ENCODE measurements at regions of chr16 and their contacts with region 1.

Region 1: DNA sequence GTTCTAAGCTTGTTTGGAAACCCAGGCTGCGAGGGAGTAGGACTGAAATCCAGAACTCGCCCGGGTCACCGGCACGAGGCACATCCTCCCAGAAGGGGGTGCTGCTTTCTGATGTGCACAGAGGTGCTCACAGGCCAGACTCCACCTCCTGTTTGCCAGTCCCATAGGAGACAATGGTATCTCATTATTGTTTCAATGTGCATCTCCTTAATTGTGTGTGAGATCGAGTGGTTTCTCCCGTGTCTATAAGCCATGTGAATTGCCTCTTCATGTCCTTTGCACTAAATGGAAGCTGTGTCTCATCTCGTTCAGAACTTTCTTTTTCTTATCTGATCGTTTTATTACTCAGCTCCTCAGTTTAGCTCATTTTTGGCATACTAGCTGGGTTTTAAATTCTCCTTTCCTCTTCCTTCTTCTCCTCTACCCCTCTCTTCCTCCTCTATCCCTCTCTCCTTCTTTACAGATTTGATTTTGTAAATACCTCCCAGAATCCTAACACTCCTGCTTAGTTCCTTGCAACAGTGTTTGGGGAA is 32.1 kb upstream of the PRKCB start:
- DNase-seq: peak; percentile 51 to 65 (median 58)
- H3K4me3 ChIP-seq: no peak overlapping the region
- H3K4me3 Mint-ChIP-seq: peak overlapping the region; percentile 21 to 56
- H3K27ac ChIP-seq: no peak overlapping the region
- H3K27ac Mint-ChIP-seq: peak overlapping the region in 1 of 7 donors; percentile 86
- H3K4me1 ChIP-seq: peaks cover 8 to 26% of the 10 kb centered on the region in 2 donors
- H3K4me1 Mint-ChIP-seq: peaks cover 29% of the 10 kb centered on the region
- H3K27me3 ChIP-seq: no peaks in the 10 kb centered on the region
- H3K27me3 Mint-ChIP-seq: peaks cover 0 to 5% (median 2%) of the 10 kb centered on the region in 3 donors
- CTCF ChIP-seq: peak; percentile 86

Region 2: DNA sequence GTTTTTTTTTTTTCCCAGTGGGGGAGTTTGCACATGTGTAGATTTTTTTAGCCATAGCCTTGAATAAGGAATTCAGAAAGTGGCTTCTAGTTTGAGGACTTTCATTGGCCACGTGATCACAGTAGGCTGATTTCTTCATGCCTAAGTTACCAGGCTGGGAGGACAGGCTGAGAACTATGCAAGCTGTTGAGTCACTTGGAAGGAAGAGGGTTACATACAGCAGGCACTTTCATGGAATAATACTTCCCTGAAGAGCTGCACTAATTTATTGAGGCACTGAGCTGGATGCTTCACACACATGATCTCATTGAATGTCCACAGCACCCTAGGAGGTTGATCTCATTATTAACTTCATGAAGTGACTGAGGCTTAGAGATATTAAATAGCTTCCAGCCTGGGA is 54.9 kb after region 1 on chr16:
- intact Hi-C with region 1: loop called in 1 of 2 experiments (anchors 10 kb)
- DNase-seq: peak; percentile 75 to 96 (median 84)
- H3K4me3 ChIP-seq: peak overlapping the region in 1 of 3 experiments; percentile 53
- H3K4me3 Mint-ChIP-seq: peak overlapping the region; percentile 24 to 62
- H3K27ac ChIP-seq: peak overlapping the region; percentile 85 to 87
- H3K27ac Mint-ChIP-seq: peak overlapping the region; percentile 93 to 98 (median 95)
- H3K4me1 ChIP-seq: peaks cover 98 to 100% of the 10 kb centered on the region in 2 donors
- H3K4me1 Mint-ChIP-seq: peaks cover 96% of the 10 kb centered on the region
- H3K27me3 ChIP-seq: no peaks in the 10 kb centered on the region
- H3K27me3 Mint-ChIP-seq: no peaks in the 10 kb centered on the region
- CTCF ChIP-seq: no peak

Region 3: DNA sequence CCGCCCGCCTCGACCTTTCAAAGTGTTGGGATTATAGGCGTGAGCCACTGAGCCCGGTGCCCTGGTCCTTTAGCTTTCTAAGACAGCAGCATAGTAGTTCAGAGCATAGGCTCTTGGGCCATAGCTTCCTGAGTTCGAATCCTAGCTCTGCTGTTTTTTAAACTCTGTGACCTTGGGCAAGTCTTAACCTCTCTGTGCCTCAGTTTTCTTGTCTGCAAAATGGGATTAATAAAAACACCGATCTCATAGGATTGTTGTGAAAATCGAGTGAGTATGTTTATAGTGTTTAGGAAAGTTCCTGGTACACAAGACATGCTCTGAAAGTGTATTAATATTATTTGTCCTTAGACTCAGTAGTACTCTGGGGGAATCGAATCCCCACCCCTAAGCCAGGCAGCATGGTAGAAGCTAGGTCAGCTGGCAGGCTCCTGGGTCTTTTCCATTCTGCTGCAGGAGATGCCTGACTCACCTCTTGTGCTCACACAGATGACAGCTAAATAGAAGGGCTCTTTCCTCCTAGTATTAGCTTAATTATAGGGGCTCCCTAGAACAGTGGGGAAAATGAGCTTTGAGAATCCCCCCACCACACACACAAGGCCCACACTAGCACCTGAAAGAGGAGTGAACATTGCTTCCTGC is 76.2 kb after region 1 on chr16:
- intact Hi-C with region 1: loop called in 1 of 2 experiments (anchors 5 kb)
- DNase-seq: peak in 1 of 3 donors; percentile 21
- H3K4me3 ChIP-seq: no peak overlapping the region
- H3K4me3 Mint-ChIP-seq: no peak overlapping the region
- H3K27ac ChIP-seq: peak overlapping the region in 1 of 2 donors; percentile 76
- H3K27ac Mint-ChIP-seq: peak overlapping the region; percentile 37 to 91 (median 69)
- H3K4me1 ChIP-seq: peaks cover 61 to 79% of the 10 kb centered on the region in 2 donors
- H3K4me1 Mint-ChIP-seq: peaks cover 84% of the 10 kb centered on the region
- H3K27me3 ChIP-seq: no peaks in the 10 kb centered on the region
- H3K27me3 Mint-ChIP-seq: peaks cover 0 to 2% (median 0%) of the 10 kb centered on the region in 3 donors
- CTCF ChIP-seq: no peak

Region 4: DNA sequence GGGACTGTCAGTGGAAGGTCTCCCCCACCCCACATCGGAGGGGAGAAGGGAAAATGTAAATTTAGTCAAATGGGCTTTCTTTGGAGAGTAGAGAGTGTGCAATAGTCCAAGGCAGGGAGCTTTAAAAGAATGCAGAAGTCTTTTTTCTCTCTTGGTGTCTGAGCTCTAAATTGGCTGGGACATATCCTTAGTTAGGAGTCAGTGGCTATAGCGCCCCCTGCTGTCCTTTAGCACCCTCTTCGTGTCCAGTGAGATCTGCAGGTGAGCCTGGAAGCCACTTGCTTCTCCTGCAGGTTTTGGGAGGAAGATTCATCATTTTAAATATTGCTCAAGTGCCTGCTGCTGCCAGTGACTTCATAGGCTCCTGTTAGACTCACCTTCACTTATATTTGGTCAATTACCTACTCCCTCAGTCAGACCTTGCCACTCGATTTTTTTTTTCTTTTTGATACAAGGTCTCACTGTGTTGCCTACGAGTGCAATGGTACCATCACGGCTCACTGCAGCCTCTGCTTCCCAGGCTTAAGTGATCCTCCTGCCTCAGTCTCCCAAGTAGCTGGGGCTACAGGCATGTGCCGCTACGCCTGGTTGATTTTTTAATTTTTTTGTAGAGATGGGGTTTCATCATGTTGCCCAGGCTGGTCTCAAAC is 206.9 kb after region 1 on chr16:
- intact Hi-C with region 1: loop called (anchors 2 to 5 kb)
- DNase-seq: peak; percentile 75 to 83 (median 78)
- H3K4me3 ChIP-seq: no peak overlapping the region
- H3K4me3 Mint-ChIP-seq: no peak overlapping the region
- H3K27ac ChIP-seq: peak overlapping the region in 1 of 2 donors; percentile 67
- H3K27ac Mint-ChIP-seq: peak overlapping the region; percentile 55 to 93 (median 84)
- H3K4me1 ChIP-seq: peaks cover 49 to 62% of the 10 kb centered on the region in 2 donors
- H3K4me1 Mint-ChIP-seq: peaks cover 69% of the 10 kb centered on the region
- H3K27me3 ChIP-seq: no peaks in the 10 kb centered on the region
- H3K27me3 Mint-ChIP-seq: no peaks in the 10 kb centered on the region
- CTCF ChIP-seq: peak; percentile 94

Region 5: GRCh38 chr16:24036614-24037013 is 233.0 kb after region 1 on chr16:
- intact Hi-C with region 1: loop called (anchors 1 to 2 kb)
- DNase-seq: peak; percentile 13 to 29 (median 24)
- H3K4me3 ChIP-seq: no peak overlapping the region
- H3K4me3 Mint-ChIP-seq: no peak overlapping the region
- H3K27ac ChIP-seq: no peak overlapping the region
- H3K27ac Mint-ChIP-seq: peak overlapping the region in 2 of 7 donors; percentile 13 to 22
- H3K4me1 ChIP-seq: peaks cover 15 to 22% of the 10 kb centered on the region in 2 donors
- H3K4me1 Mint-ChIP-seq: peaks cover 30% of the 10 kb centered on the region
- H3K27me3 ChIP-seq: no peaks in the 10 kb centered on the region
- H3K27me3 Mint-ChIP-seq: peaks cover 0 to 2% (median 1%) of the 10 kb centered on the region in 3 donors
- CTCF ChIP-seq: peak; percentile 79

Region 6: DNA sequence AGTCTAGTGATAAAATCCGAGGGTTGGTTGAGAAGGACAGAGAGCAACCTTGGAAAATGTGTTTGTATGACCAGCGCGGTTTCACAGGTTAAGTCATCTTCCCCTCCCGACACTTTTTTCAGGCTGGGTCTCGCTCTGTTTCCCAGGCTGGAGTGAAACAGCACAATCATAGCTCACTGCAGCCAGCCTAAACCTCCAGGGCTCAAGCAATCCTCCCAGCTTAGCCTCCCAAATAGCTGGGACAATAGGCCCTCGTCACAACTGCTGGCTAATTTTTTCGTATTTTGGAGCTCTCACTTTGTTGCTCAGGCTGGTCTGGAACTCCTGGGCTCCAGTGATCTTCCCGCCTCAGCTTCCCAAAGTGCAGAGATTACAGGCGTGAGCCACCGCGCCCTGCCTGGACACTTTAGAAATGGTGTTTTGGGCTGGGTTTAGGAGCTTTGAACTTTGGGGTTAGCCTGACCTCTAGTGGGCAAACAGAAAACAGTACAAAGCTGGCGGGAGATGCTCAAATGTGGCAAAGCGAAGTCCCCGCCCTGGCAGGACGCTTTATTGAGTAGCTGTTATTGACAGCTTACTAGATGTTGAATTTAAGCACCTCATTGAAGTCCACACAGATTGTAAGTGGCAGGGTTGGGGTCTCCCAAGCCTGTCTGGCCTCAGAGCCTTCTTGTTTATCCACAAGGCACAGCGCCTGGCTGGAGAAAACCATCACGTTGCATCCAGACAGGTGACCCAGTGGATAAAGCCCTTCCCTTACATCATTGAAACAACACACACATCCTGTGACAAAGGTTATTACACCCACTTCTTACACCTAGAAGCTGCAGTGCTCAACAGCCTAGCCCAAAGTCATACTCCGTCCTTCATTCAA is 701.1 kb after region 1 on chr16:
- intact Hi-C with region 1: loop called in 1 of 2 experiments (anchors 10 kb)
- DNase-seq: peak; percentile 25 to 51 (median 37)
- H3K4me3 ChIP-seq: no peak overlapping the region
- H3K4me3 Mint-ChIP-seq: no peak overlapping the region
- H3K27ac ChIP-seq: no peak overlapping the region
- H3K27ac Mint-ChIP-seq: no peak overlapping the region
- H3K4me1 ChIP-seq: no peaks in the 10 kb centered on the region
- H3K4me1 Mint-ChIP-seq: peaks cover 1% of the 10 kb centered on the region
- H3K27me3 ChIP-seq: no peaks in the 10 kb centered on the region
- H3K27me3 Mint-ChIP-seq: peaks cover 3 to 15% (median 11%) of the 10 kb centered on the region in 3 donors
- CTCF ChIP-seq: peak; percentile 82

Measured in CD14-positive monocyte (primary cell).